ENCODE measurements at regions of chr11 and their contacts with region 1.

Region 1: GRCh38 chr11:9074338-9075029 is 16.9 kb downstream of the SCUBE2 start:
- DNase-seq: no peak
- H3K4me3 ChIP-seq: no peak overlapping the region
- H3K27ac ChIP-seq: no peak overlapping the region
- H3K4me1 ChIP-seq: no peaks in the 10 kb centered on the region
- H3K27me3 ChIP-seq: peaks cover 2 to 7% of the 10 kb centered on the region in 2 experiments
- CTCF ChIP-seq: no peak
- POLR2A ChIP-seq: no peak

Region 2: GRCh38 chr11:8851316-8851715 is 223.2 kb before region 1 on chr11:
- CTCF ChIA-PET with region 1: no interaction called
- POLR2A ChIA-PET with region 1: interaction called, 13 read pairs
- dilution Hi-C with region 1: no loop called
- intact Hi-C with region 1: no loop called
- DNase-seq: no peak
- H3K4me3 ChIP-seq: no peak overlapping the region
- H3K27ac ChIP-seq: no peak overlapping the region
- H3K4me1 ChIP-seq: no peaks in the 10 kb centered on the region
- H3K27me3 ChIP-seq: peaks cover 0 to 2% of the 10 kb centered on the region in 2 experiments
- CTCF ChIP-seq: no peak
- POLR2A ChIP-seq: no peak